Naive thymus-derived CD4-positive, alpha-beta T cell (primary cell): ENCODE measurements at regions of chr22 and their contacts with region 1.

Region 1: GRCh38 chr22:37077884-37078485 is 26.4 kb downstream of the KCTD17 start:
- DNase-seq: peak; percentile 69 to 92 (median 83)
- ATAC-seq: peak; percentile 56
- H3K4me3 ChIP-seq: no peak overlapping the region
- H3K4me3 Mint-ChIP-seq: peak overlapping the region; percentile 41 to 81 (median 65)
- H3K27ac ChIP-seq: peak overlapping the region; percentile 93
- H3K27ac Mint-ChIP-seq: peak overlapping the region; percentile 95 to 100 (median 99)
- H3K4me1 ChIP-seq: peaks cover 34 to 35% of the 10 kb centered on the region in 2 donors
- H3K4me1 Mint-ChIP-seq: peaks cover 23 to 54% (median 40%) of the 10 kb centered on the region in 7 donors
- H3K27me3 ChIP-seq: no peaks in the 10 kb centered on the region
- H3K27me3 Mint-ChIP-seq: peaks cover 0 to 5% (median 4%) of the 10 kb centered on the region in 5 donors

Region 2: GRCh38 chr22:37121887-37122591 is 44.1 kb after region 1 on chr22:
- CTCF ChIA-PET with region 1: interaction called, 5 read pairs
- POLR2A ChIA-PET with region 1: interaction called, 15 read pairs
- intact Hi-C with region 1: loop called (anchors 1 kb)
- DNase-seq: peak; percentile 62 to 98 (median 94)
- ATAC-seq: peak; percentile 99
- H3K4me3 ChIP-seq: peak overlapping the region; percentile 30
- H3K4me3 Mint-ChIP-seq: peak overlapping the region; percentile 69 to 91 (median 79)
- H3K27ac ChIP-seq: peak overlapping the region; percentile 96
- H3K27ac Mint-ChIP-seq: peak overlapping the region; percentile 95 to 100 (median 98)
- H3K4me1 ChIP-seq: peaks cover 21 to 30% of the 10 kb centered on the region in 2 donors
- H3K4me1 Mint-ChIP-seq: peaks cover 19 to 86% (median 65%) of the 10 kb centered on the region in 7 donors
- H3K27me3 ChIP-seq: no peaks in the 10 kb centered on the region
- H3K27me3 Mint-ChIP-seq: peaks cover 0 to 2% (median 0%) of the 10 kb centered on the region in 5 donors

Region 3: GRCh38 chr22:37148742-37149665 is 71.0 kb after region 1 on chr22:
- CTCF ChIA-PET with region 1: interaction called, 6 read pairs
- POLR2A ChIA-PET with region 1: interaction called, 7 read pairs
- intact Hi-C with region 1: loop called (anchors 1 kb)
- DNase-seq: peak in 1 of 9 donors; percentile 37
- ATAC-seq: no peak
- H3K4me3 ChIP-seq: peak overlapping the region; percentile 69
- H3K4me3 Mint-ChIP-seq: peak overlapping the region; percentile 70 to 91 (median 86)
- H3K27ac ChIP-seq: peak overlapping the region; percentile 84
- H3K27ac Mint-ChIP-seq: peak overlapping the region; percentile 92 to 99 (median 95)
- H3K4me1 ChIP-seq: peaks cover 40 to 46% of the 10 kb centered on the region in 2 donors
- H3K4me1 Mint-ChIP-seq: peaks cover 36 to 82% (median 64%) of the 10 kb centered on the region in 7 donors
- H3K27me3 ChIP-seq: no peaks in the 10 kb centered on the region
- H3K27me3 Mint-ChIP-seq: no peaks in the 10 kb centered on the region

Region 4: DNA sequence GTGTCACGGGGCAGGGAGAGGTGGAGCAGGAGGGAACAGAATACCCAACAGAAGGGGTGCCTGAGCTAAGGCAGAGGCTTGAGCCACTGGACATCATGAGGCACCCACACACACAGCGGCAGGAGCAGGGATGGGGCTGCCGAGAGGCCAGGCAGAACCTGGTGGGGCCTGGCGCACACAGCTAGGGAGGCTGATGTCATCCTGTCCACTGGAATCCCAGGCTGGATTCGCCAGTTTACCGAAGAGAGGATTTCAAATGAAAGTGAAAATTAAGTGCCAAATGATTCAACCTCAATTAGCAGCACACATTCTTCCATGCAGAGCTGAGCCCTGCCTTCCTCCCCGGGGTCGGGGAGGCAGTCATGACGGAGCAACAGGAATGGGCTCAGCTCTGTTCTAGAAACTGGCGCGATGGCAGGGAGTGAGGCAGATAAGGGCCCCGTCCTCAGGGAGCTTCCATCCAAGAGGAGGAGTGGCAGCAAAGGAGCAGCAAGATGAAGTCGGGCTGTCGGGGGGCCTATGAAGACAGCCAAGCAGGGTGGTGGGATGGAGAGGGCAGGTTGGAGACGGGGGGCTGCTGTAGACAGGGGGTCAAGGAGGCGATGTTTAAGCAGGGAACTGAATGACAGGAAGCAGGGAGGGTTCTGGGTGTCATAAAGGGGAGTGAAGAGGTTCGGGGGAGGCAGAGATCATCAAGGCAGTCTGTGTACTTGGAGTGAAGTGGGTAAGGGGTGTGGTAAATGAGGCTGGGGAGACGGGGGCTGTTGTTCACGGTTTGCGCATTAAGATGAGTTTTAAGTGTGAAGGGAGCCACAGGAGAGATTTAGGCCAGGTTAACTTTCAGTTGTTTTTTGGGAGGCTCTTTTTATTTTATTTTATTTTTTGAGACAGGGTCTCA is 159.6 kb after region 1 on chr22:
- CTCF ChIA-PET with region 1: interaction called, 3 read pairs
- POLR2A ChIA-PET with region 1: interaction called, 3 read pairs
- intact Hi-C with region 1: loop called in 1 of 2 experiments (anchors 2 kb)
- DNase-seq: peak in 6 of 9 donors; percentile 21 to 63 (median 46)
- ATAC-seq: no peak
- H3K4me3 ChIP-seq: peak overlapping the region; percentile 49
- H3K4me3 Mint-ChIP-seq: peak overlapping the region; percentile 85 to 99 (median 92)
- H3K27ac ChIP-seq: peak overlapping the region; percentile 86
- H3K27ac Mint-ChIP-seq: peak overlapping the region; percentile 93 to 100 (median 98)
- H3K4me1 ChIP-seq: peaks cover 87 to 90% of the 10 kb centered on the region in 2 donors
- H3K4me1 Mint-ChIP-seq: peaks cover 80 to 100% (median 95%) of the 10 kb centered on the region in 7 donors
- H3K27me3 ChIP-seq: no peaks in the 10 kb centered on the region
- H3K27me3 Mint-ChIP-seq: no peaks in the 10 kb centered on the region

Region 5: GRCh38 chr22:37260901-37261336 is 182.9 kb after region 1 on chr22:
- CTCF ChIA-PET with region 1: interaction called, 8 read pairs
- POLR2A ChIA-PET with region 1: no interaction called
- intact Hi-C with region 1: loop called in 1 of 2 experiments (anchors 1 kb)
- DNase-seq: peak; percentile 46 to 71 (median 64)
- ATAC-seq: peak; percentile 91
- H3K4me3 ChIP-seq: no peak overlapping the region
- H3K4me3 Mint-ChIP-seq: peak overlapping the region in 6 of 10 donors; percentile 1 to 33 (median 15)
- H3K27ac ChIP-seq: no peak overlapping the region
- H3K27ac Mint-ChIP-seq: peak overlapping the region in 8 of 9 donors; percentile 7 to 86 (median 56)
- H3K4me1 ChIP-seq: peaks cover 7 to 24% of the 10 kb centered on the region in 2 donors
- H3K4me1 Mint-ChIP-seq: peaks cover 23 to 32% (median 27%) of the 10 kb centered on the region in 7 donors
- H3K27me3 ChIP-seq: no peaks in the 10 kb centered on the region
- H3K27me3 Mint-ChIP-seq: peaks cover 0 to 13% (median 0%) of the 10 kb centered on the region in 5 donors

Region 6: DNA sequence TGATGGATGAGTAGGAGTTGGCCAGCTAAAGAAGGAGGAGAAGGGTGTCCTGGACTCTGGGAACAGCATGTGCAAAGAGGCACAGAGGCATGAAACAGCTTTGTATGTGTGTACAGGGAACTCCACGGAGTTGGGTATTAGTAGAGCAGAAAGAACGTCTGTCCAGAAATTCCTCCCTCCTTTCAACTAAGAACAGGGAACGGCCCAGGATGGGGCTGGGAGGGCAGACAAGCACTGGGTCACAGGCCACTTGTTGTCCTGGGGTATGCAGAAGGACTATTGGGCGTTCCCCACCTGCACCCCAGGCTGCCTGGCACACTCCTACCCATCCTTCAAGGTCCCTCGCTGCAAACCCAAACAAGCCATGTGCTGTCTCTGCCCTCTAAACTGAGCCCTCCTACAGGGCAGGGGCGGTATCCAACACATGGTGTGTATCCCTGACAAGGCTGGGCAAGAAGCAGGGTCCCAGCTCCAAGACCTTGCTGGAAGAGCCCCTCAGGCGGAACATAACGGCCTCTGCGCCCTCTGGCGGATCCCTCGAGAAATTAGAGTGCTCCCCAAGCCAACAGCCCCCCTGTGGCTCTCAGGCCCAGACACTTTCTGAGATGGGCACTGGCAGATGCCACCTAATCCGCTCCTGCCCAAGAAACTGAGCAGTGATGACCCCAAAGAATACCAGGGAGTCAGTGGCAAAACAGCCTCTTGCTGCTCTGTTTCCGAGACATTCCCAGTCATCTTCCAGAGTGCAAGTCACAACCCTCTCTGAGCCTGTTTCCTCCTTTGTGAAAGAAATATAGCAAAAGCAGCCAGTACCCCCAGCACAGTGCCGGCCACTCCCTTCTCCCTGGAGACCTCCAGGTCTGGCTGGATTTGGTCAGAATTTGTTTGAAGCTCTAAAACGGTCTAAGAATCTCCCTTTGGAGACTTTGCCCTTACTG is 350.9 kb after region 1 on chr22:
- CTCF ChIA-PET with region 1: no interaction called
- POLR2A ChIA-PET with region 1: no interaction called
- intact Hi-C with region 1: loop called in 1 of 2 experiments (anchors 10 kb)
- DNase-seq: peak; percentile 23 to 64 (median 54)
- ATAC-seq: peak; percentile 69
- H3K4me3 ChIP-seq: no peak overlapping the region
- H3K4me3 Mint-ChIP-seq: peak overlapping the region in 8 of 10 donors; percentile 24 to 79 (median 40)
- H3K27ac ChIP-seq: no peak overlapping the region
- H3K27ac Mint-ChIP-seq: no peak overlapping the region
- H3K4me1 ChIP-seq: peaks cover 5 to 8% of the 10 kb centered on the region in 2 donors
- H3K4me1 Mint-ChIP-seq: peaks cover 0 to 25% (median 0%) of the 10 kb centered on the region in 7 donors
- H3K27me3 ChIP-seq: peaks cover 12 to 14% of the 10 kb centered on the region in 2 donors
- H3K27me3 Mint-ChIP-seq: peaks cover 42 to 62% (median 52%) of the 10 kb centered on the region in 5 donors

Region 7: DNA sequence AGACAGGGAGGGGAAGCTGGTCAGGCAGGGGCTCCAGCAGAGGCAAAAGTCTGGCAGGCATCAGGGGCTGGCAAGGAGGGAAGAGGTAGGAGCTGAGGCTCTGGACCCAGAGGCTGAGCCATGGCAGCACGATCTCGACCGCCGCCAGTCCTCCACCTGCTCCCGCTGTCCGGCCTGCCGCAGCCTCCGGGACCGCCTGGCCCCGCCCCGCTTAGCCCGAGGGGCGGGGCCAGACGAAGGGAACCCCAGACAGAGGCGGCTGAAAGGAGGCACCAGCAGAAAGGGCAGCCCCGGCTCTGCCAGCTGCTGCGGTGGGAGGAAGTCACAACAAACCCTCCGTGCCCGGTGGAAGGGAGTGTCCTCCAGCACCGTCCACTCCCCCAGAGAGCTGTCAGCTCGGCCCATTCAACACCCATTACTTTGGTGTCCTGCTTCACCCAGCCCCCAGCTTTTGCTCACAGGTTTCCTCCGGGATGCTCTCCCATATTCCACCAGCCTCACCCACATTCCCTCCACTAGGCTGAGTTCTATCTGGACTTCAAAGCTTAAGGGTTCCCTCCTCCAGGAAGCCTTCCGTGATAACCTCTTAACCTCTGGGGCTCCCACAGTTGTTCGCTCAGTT is 408.4 kb after region 1 on chr22 and contains the start of gene MFNG:
- CTCF ChIA-PET with region 1: no interaction called
- POLR2A ChIA-PET with region 1: interaction called, 4 read pairs
- intact Hi-C with region 1: loop called in 1 of 2 experiments (anchors 10 kb)
- DNase-seq: peak; percentile 57 to 82 (median 61)
- ATAC-seq: peak; percentile 81
- H3K4me3 ChIP-seq: peak within 1 kb of the TSS; percentile 84
- H3K4me3 Mint-ChIP-seq: peak within 1 kb of the TSS; percentile 91 to 99 (median 96)
- H3K27ac ChIP-seq: peak within 1 kb of the TSS; percentile 86
- H3K27ac Mint-ChIP-seq: peak within 1 kb of the TSS; percentile 94 to 99 (median 98)
- H3K4me1 ChIP-seq: peaks cover 25 to 57% of the 10 kb centered on the region in 2 donors
- H3K4me1 Mint-ChIP-seq: peaks cover 53 to 79% (median 68%) of the 10 kb centered on the region in 7 donors
- H3K27me3 ChIP-seq: no peaks in the 10 kb centered on the region
- H3K27me3 Mint-ChIP-seq: no peaks in the 10 kb centered on the region
- total RNA-seq, gene MFNG: 146 to 223 (median 203) TPM

Region 8: GRCh38 chr22:37525073-37525748 is 447.2 kb after region 1 on chr22:
- CTCF ChIA-PET with region 1: no interaction called
- POLR2A ChIA-PET with region 1: no interaction called
- intact Hi-C with region 1: no loop called
- DNase-seq: peak in 1 of 9 donors; percentile 52
- ATAC-seq: peak; percentile 36
- H3K4me3 ChIP-seq: no peak overlapping the region
- H3K4me3 Mint-ChIP-seq: no peak overlapping the region
- H3K27ac ChIP-seq: no peak overlapping the region
- H3K27ac Mint-ChIP-seq: no peak overlapping the region
- H3K4me1 ChIP-seq: no peaks in the 10 kb centered on the region
- H3K4me1 Mint-ChIP-seq: peaks cover 8 to 12% (median 8%) of the 10 kb centered on the region in 7 donors
- H3K27me3 ChIP-seq: peaks cover 0 to 1% of the 10 kb centered on the region in 2 donors
- H3K27me3 Mint-ChIP-seq: peaks cover 19 to 42% (median 27%) of the 10 kb centered on the region in 5 donors